ENCODE measurements at regions of chr12 and their contacts with region 1.

Region 1: GRCh38 chr12:50025187-50026059 is at the start of gene RACGAP1:
- DNase-seq: peak; percentile 98
- H3K4me3 Mint-ChIP-seq: peak within 1 kb of the TSS; percentile 94
- H3K27ac Mint-ChIP-seq: peak within 1 kb of the TSS; percentile 96
- H3K4me1 Mint-ChIP-seq: peaks cover 44% of the 10 kb centered on the region
- H3K27me3 Mint-ChIP-seq: peaks cover 2% of the 10 kb centered on the region
- total RNA-seq, gene RACGAP1: 172 to 179 TPM

Region 2: GRCh38 chr12:50006789-50007436 is 18.5 kb before region 1 on chr12:
- CTCF ChIA-PET with region 1: interaction called, 4 read pairs
- POLR2A ChIA-PET with region 1: interaction called, 12 read pairs
- DNase-seq: no peak
- H3K4me3 Mint-ChIP-seq: no peak overlapping the region
- H3K27ac Mint-ChIP-seq: no peak overlapping the region
- H3K4me1 Mint-ChIP-seq: peaks cover 15% of the 10 kb centered on the region
- H3K27me3 Mint-ChIP-seq: no peaks in the 10 kb centered on the region

Region 3: GRCh38 chr12:50084775-50085614 is 59.6 kb after region 1 on chr12 and contains the start of gene SMARCD1:
- CTCF ChIA-PET with region 1: interaction called, 6 read pairs
- POLR2A ChIA-PET with region 1: interaction called, 11 read pairs
- DNase-seq: peak; percentile 83
- H3K4me3 Mint-ChIP-seq: peak within 1 kb of the TSS; percentile 88
- H3K27ac Mint-ChIP-seq: peak within 1 kb of the TSS; percentile 88
- H3K4me1 Mint-ChIP-seq: peaks cover 41% of the 10 kb centered on the region
- H3K27me3 Mint-ChIP-seq: no peaks in the 10 kb centered on the region
- total RNA-seq, gene SMARCD1: 57.3 to 63.3 TPM

Region 4: DNA sequence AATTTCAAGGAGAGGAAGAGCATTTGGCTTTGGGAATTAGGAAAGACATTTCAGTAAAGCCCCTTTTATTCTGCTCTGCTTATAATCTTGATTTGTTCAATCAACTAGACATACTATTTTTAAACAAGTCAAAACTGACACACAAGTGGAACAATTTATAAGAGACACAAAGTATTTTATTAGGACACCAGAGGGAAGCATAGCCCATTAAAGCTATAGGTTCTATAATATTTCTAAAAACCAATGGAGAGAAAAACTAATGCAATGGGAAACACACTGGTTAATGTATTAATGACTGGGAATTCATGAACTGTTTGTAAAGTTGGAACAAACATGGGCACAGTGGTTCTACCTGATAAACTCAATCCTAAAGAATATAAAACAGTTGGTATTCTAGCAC is 157.0 kb after region 1 on chr12:
- CTCF ChIA-PET with region 1: no interaction called
- POLR2A ChIA-PET with region 1: no interaction called
- DNase-seq: no peak
- H3K4me3 Mint-ChIP-seq: no peak overlapping the region
- H3K27ac Mint-ChIP-seq: no peak overlapping the region
- H3K4me1 Mint-ChIP-seq: peaks cover 33% of the 10 kb centered on the region
- H3K27me3 Mint-ChIP-seq: no peaks in the 10 kb centered on the region

Measured in activated CD4-positive, alpha-beta memory T cell treated with anti-CD3 and anti-CD28 coated beads, Interleukin-2, amount 10 ng/mL, durations not matched to agents 7 days and 5 days (primary cell).